Activated CD8-positive, alpha-beta T cell treated with anti-CD3 and anti-CD28 coated beads for 36 hours (primary cell): ENCODE measurements at regions of chr17 and their contacts with region 1.

Region 1: GRCh38 chr17:27654654-27655524 is 23.9 kb downstream of the LGALS9 start:
- DNase-seq: peak; percentile 85
- ATAC-seq: peak; percentile 97
- H3K4me3 Mint-ChIP-seq: no peak overlapping the region
- H3K27ac Mint-ChIP-seq: no peak overlapping the region
- H3K4me1 Mint-ChIP-seq: peaks cover 5% of the 10 kb centered on the region
- H3K27me3 Mint-ChIP-seq: peaks cover 2% of the 10 kb centered on the region
- CTCF ChIP-seq: peak; percentile 97

Region 2: GRCh38 chr17:27181935-27182334 is 473.0 kb before region 1 on chr17:
- CTCF ChIA-PET with region 1: no interaction called
- POLR2A ChIA-PET with region 1: no interaction called
- intact Hi-C with region 1: no loop called
- DNase-seq: no peak
- ATAC-seq: no peak
- H3K4me3 Mint-ChIP-seq: no peak overlapping the region
- H3K27ac Mint-ChIP-seq: no peak overlapping the region
- H3K4me1 Mint-ChIP-seq: no peaks in the 10 kb centered on the region
- H3K27me3 Mint-ChIP-seq: no peaks in the 10 kb centered on the region
- CTCF ChIP-seq: no peak

Region 3: GRCh38 chr17:27353461-27354050 is 301.3 kb before region 1 on chr17:
- CTCF ChIA-PET with region 1: interaction called, 10 read pairs
- POLR2A ChIA-PET with region 1: no interaction called
- intact Hi-C with region 1: no loop called
- DNase-seq: peak; percentile 90
- ATAC-seq: peak; percentile 88
- H3K4me3 Mint-ChIP-seq: peak overlapping the region; percentile 78
- H3K27ac Mint-ChIP-seq: peak overlapping the region; percentile 96
- H3K4me1 Mint-ChIP-seq: peaks cover 25% of the 10 kb centered on the region
- H3K27me3 Mint-ChIP-seq: no peaks in the 10 kb centered on the region
- CTCF ChIP-seq: peak; percentile 90

Region 4: DNA sequence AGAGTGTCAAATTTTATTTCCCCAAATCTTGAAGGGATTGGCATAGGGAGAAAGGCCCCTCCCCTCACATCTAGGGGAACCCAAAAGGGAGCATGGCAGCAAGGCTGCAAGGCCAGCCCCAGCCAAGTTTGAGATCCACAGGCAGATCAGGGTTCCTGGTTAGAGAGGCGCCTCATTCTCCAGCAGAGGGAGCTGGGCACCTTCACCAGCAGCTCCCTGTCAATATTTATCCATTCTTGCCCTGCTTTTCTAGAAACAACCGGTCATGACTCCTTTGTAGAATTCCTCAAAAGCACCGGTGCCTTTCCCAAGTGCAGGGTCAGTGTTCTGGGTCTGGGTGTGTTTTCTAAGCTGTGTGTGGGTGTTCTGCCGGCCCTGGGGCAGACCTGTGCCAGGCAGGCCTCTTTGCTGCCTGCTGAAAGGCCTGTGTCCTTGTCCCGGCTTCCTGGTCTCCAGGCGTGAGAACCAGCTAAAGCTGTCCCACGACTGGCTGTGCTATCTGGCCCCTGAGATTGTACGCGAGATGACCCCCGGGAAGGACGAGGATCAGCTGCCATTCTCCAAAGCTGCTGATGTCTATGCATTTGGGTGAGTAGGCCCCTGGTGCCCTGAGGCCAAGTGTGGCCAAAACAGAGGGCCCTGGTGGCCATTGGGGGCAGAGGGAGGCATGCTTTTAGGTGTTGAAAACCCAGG is 45.1 kb before region 1 on chr17:
- CTCF ChIA-PET with region 1: interaction called, 152 read pairs
- POLR2A ChIA-PET with region 1: no interaction called
- intact Hi-C with region 1: loop called (anchors 5 kb)
- DNase-seq: peak; percentile 45
- ATAC-seq: no peak
- H3K4me3 Mint-ChIP-seq: no peak overlapping the region
- H3K27ac Mint-ChIP-seq: no peak overlapping the region
- H3K4me1 Mint-ChIP-seq: peaks cover 12% of the 10 kb centered on the region
- H3K27me3 Mint-ChIP-seq: no peaks in the 10 kb centered on the region
- CTCF ChIP-seq: peak; percentile 27

Region 5: GRCh38 chr17:27630607-27631410 is 24.1 kb before region 1 on chr17 and contains the start of gene LGALS9:
- CTCF ChIA-PET with region 1: interaction called, 10 read pairs
- POLR2A ChIA-PET with region 1: no interaction called
- intact Hi-C with region 1: no loop called
- DNase-seq: peak; percentile 48
- ATAC-seq: peak; percentile 79
- H3K4me3 Mint-ChIP-seq: peak within 1 kb of the TSS; percentile 60
- H3K27ac Mint-ChIP-seq: peak within 1 kb of the TSS; percentile 79
- H3K4me1 Mint-ChIP-seq: peaks cover 27% of the 10 kb centered on the region
- H3K27me3 Mint-ChIP-seq: no peaks in the 10 kb centered on the region
- CTCF ChIP-seq: no peak
- total RNA-seq, gene LGALS9: 17.3 to 18.4 TPM

Region 6: DNA sequence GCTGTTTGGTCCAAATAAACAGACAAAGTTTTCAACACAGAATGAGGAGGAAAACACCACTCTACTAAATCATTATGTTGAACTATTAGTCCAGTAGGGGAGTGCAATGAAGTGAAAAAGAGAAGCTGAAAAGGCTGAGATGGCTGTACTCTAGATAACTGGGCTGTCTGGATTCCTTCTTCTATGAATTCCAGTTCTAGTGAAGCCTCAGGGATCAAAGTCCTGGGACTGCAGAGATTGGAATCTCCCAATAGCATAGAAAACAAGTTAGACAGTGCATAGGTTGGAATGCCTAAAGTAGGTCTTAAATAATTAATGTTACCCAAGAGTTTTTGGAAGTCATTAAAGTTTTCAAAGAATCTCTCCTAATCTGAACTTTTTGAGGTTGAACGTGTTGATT is 36.0 kb after region 1 on chr17:
- CTCF ChIA-PET with region 1: interaction called, 11 read pairs
- POLR2A ChIA-PET with region 1: no interaction called
- intact Hi-C with region 1: no loop called
- DNase-seq: no peak
- ATAC-seq: no peak
- H3K4me3 Mint-ChIP-seq: no peak overlapping the region
- H3K27ac Mint-ChIP-seq: no peak overlapping the region
- H3K4me1 Mint-ChIP-seq: no peaks in the 10 kb centered on the region
- H3K27me3 Mint-ChIP-seq: no peaks in the 10 kb centered on the region
- CTCF ChIP-seq: no peak

Region 7: GRCh38 chr17:27968206-27968732 is 313.4 kb after region 1 on chr17:
- CTCF ChIA-PET with region 1: no interaction called
- POLR2A ChIA-PET with region 1: no interaction called
- intact Hi-C with region 1: no loop called
- DNase-seq: no peak
- ATAC-seq: no peak
- H3K4me3 Mint-ChIP-seq: no peak overlapping the region
- H3K27ac Mint-ChIP-seq: no peak overlapping the region
- H3K4me1 Mint-ChIP-seq: no peaks in the 10 kb centered on the region
- H3K27me3 Mint-ChIP-seq: peaks cover 2% of the 10 kb centered on the region
- CTCF ChIP-seq: no peak